CD4-positive, alpha-beta T cell (primary cell): ENCODE measurements at regions of chr1 and their contacts with region 1.

Region 1: GRCh38 chr1:114346480-114347029 is 164.4 kb downstream of the TRIM33 start:
- DNase-seq: peak; percentile 92 to 99 (median 98)
- ATAC-seq: peak; percentile 98
- H3K4me3 ChIP-seq: peak overlapping the region; percentile 55
- H3K4me3 Mint-ChIP-seq: peak overlapping the region; percentile 97
- H3K27ac ChIP-seq: peak overlapping the region in 1 of 2 donors; percentile 22
- H3K27ac Mint-ChIP-seq: peak overlapping the region; percentile 79
- H3K4me1 ChIP-seq: peaks cover 49% of the 10 kb centered on the region
- H3K4me1 Mint-ChIP-seq: peaks cover 31% of the 10 kb centered on the region
- H3K27me3 ChIP-seq: no peaks in the 10 kb centered on the region
- H3K27me3 Mint-ChIP-seq: no peaks in the 10 kb centered on the region
- CTCF ChIP-seq: peak; percentile 100

Region 2: DNA sequence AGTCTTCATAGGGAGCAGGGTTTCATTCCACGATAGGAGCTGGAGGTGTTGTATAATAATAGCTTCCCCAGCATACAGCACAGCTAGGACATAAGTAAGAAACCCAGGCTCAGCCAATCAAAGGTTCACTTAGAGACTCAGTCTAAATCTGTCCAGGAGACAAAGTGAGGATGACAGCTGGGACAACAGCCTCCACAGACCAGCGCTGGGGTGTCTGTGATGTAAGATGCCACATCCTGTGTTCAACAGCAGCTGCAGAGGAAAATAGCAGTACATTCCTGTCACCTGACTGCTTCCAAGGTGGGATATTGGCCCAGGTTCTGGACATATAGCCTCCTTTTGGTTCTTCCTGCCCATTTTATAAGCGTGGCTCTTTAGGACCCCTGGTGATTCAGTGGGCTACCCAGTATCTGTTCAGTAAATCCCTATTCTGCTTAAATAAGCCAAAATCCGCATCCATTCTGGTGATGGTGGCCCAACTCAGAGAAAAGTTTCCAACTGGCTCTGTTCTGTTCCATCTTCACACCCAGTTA is 16.0 kb before region 1 on chr1:
- CTCF ChIA-PET with region 1: interaction called, 7 read pairs
- POLR2A ChIA-PET with region 1: interaction called, 36 read pairs
- intact Hi-C with region 1: no loop called
- DNase-seq: peak in 7 of 14 experiments; percentile 22 to 78 (median 44)
- ATAC-seq: peak; percentile 83
- H3K4me3 ChIP-seq: no peak overlapping the region
- H3K4me3 Mint-ChIP-seq: no peak overlapping the region
- H3K27ac ChIP-seq: no peak overlapping the region
- H3K27ac Mint-ChIP-seq: peak overlapping the region; percentile 61
- H3K4me1 ChIP-seq: peaks cover 57% of the 10 kb centered on the region
- H3K4me1 Mint-ChIP-seq: peaks cover 66% of the 10 kb centered on the region
- H3K27me3 ChIP-seq: no peaks in the 10 kb centered on the region
- H3K27me3 Mint-ChIP-seq: no peaks in the 10 kb centered on the region
- CTCF ChIP-seq: no peak

Region 3: DNA sequence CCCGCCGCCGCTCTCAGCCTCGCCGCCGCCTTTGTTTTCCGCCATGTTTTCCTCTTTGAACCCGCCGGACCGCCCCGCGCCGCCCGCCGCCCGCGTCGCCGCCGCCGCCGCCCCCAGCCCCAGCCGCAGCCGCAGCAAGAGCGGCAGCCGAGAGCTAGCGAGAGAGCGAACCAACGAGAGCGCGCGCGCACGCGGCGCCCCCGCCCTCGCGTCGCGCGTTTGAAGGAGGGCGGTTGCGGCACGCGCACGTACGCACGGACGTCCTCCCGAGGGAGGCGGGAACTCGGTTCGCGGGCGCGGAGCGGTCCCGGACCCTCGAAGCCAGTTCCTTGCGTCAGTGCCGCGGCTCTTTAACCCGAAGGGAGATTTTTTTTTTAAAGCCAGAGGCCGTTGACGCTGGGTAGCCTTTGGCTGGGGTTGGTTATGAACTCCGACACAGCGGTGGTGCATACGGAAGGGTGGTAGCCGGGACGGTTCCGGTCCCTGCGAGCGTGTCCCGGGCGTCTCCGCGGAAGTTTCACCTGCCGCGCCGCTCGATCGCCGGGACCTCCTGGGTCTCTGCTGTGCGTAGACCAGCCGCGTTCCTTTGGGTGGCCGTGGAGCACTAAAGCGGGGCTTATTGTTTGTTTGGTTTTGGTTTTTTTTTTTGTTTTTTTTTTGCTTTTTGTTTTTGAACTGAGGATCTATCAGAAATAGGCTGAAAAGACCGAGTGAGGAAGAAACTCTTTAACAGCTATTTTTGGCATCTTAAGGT is 164.7 kb after region 1 on chr1 and contains the start of gene TRIM33:
- CTCF ChIA-PET with region 1: no interaction called
- POLR2A ChIA-PET with region 1: interaction called, 12 read pairs
- intact Hi-C with region 1: loop called in 1 of 2 experiments (anchors 5 kb)
- DNase-seq: peak; percentile 84 to 98 (median 90)
- ATAC-seq: peak; percentile 66
- H3K4me3 ChIP-seq: peak within 1 kb of the TSS; percentile 86
- H3K4me3 Mint-ChIP-seq: peak within 1 kb of the TSS; percentile 100
- H3K27ac ChIP-seq: peak within 1 kb of the TSS; percentile 95 to 99
- H3K27ac Mint-ChIP-seq: peak within 1 kb of the TSS; percentile 100
- H3K4me1 ChIP-seq: peaks cover 43% of the 10 kb centered on the region
- H3K4me1 Mint-ChIP-seq: peaks cover 48% of the 10 kb centered on the region
- H3K27me3 ChIP-seq: no peaks in the 10 kb centered on the region
- H3K27me3 Mint-ChIP-seq: no peaks in the 10 kb centered on the region
- CTCF ChIP-seq: no peak
- total RNA-seq, gene TRIM33: 42.6 to 45.0 TPM

Region 4: DNA sequence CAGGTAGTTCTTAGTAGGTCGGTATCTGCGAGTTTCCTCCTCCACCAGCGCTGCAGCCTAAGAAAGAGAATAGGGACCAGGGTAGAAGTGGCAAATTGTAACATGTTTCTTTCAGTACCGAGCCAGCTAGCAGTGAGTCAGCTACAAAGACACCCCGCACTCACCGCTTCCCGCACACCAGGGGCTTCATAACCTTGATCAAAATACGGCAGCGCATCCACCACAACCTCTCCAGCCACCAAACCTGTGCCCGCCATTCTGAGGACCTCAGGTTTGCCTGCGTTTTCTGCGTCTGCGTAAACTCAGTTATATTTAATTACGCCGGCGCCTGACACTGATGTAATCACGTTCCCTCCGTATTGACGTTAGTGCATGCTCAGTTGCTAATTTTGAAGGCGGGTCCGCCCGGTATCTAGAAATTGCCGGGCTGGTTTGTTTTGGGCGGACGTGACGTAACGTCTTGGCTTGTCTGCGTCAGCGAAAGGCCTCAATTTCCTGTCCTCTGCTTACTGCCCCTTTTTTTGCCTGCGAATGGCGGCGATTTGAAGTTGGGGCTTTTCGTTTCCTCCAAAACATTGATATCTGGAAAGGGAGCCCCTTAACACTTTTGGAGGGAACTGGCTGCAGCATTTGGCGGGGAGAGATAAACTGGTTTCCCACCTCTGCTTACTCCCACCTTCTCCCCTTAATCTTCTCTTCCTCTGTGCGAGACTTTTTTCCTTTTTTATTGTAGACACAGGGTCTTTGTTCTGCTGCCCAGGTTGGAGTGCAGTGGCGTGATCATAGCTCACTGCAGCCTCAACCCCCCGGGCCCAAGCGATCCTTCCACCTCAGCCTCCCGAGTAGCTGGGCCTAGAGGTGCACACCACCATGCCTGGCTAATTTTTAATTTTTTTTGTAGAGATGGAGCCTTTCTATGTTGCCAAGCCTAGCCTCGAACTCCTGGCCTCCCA is 235.1 kb after region 1 on chr1 and contains the start of gene BCAS2:
- CTCF ChIA-PET with region 1: no interaction called
- POLR2A ChIA-PET with region 1: no interaction called
- intact Hi-C with region 1: loop called in 1 of 2 experiments (anchors 2 kb)
- DNase-seq: peak; percentile 88 to 99 (median 92)
- ATAC-seq: peak; percentile 92
- H3K4me3 ChIP-seq: peak within 1 kb of the TSS; percentile 86
- H3K4me3 Mint-ChIP-seq: peak within 1 kb of the TSS; percentile 95
- H3K27ac ChIP-seq: peak within 1 kb of the TSS; percentile 82 to 97
- H3K27ac Mint-ChIP-seq: peak within 1 kb of the TSS; percentile 97
- H3K4me1 ChIP-seq: peaks cover 26% of the 10 kb centered on the region
- H3K4me1 Mint-ChIP-seq: peaks cover 48% of the 10 kb centered on the region
- H3K27me3 ChIP-seq: no peaks in the 10 kb centered on the region
- H3K27me3 Mint-ChIP-seq: no peaks in the 10 kb centered on the region
- CTCF ChIP-seq: no peak
- total RNA-seq, gene BCAS2: 109 to 111 TPM

Region 5: DNA sequence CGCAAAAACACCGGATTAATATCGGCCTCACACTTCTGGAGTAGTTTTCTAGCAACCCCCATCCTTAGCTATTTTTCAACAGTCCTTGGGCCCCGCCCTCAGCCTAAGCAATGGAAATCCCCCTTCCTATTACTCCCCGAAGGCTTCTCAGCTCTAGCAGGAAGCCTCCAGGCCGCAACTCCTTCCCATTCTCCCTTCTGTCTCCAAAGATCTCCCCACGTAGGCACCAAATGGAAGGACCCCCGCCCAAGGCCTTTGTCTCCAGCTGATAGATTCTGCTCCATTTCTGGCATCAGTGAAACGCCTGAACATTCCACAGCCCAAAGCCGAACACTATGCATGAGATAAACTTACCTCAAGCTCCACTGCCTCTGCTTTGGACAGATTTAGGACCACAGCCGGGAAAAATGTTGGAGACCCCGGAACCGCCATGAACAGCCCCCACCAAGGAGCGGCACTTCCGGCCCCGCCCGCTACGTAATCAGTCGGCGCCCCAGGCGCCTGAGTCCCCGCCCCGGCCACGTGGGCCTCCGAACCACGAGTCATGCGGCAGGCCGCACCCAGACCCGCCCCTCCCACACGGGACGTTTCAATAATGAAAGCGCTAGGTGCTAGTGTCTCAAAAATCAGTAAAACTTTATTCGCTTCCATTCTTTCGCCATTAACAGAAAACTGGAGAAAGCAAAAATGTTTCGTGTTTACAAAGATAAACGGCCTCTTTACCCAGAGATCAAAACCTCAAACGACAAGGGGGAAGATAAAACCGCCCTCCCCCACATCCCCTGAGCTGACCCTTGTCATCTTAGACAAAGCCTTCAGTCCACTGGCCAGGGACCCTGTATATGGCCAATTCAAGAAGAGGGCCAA is 370.0 kb after region 1 on chr1 and contains the start of gene NRAS:
- CTCF ChIA-PET with region 1: no interaction called
- POLR2A ChIA-PET with region 1: interaction called, 3 read pairs
- intact Hi-C with region 1: loop called in 1 of 2 experiments (anchors 10 kb)
- DNase-seq: peak; percentile 87 to 97 (median 94)
- ATAC-seq: peak; percentile 96
- H3K4me3 ChIP-seq: peak within 1 kb of the TSS; percentile 72
- H3K4me3 Mint-ChIP-seq: peak within 1 kb of the TSS; percentile 91
- H3K27ac ChIP-seq: peak within 1 kb of the TSS; percentile 83 to 96
- H3K27ac Mint-ChIP-seq: peak within 1 kb of the TSS; percentile 98
- H3K4me1 ChIP-seq: peaks cover 16% of the 10 kb centered on the region
- H3K4me1 Mint-ChIP-seq: peaks cover 21% of the 10 kb centered on the region
- H3K27me3 ChIP-seq: no peaks in the 10 kb centered on the region
- H3K27me3 Mint-ChIP-seq: no peaks in the 10 kb centered on the region
- CTCF ChIP-seq: no peak
- total RNA-seq, gene NRAS: 28.9 to 30.4 TPM

Region 6: GRCh38 chr1:115098979-115099692 is 752.6 kb after region 1 on chr1:
- CTCF ChIA-PET with region 1: no interaction called
- POLR2A ChIA-PET with region 1: no interaction called
- intact Hi-C with region 1: loop called in 1 of 2 experiments (anchors 10 kb)
- DNase-seq: peak; percentile 50 to 95 (median 69)
- ATAC-seq: peak; percentile 90
- H3K4me3 ChIP-seq: peak overlapping the region; percentile 55
- H3K4me3 Mint-ChIP-seq: peak overlapping the region; percentile 89
- H3K27ac ChIP-seq: peak overlapping the region; percentile 90 to 91
- H3K27ac Mint-ChIP-seq: peak overlapping the region; percentile 93
- H3K4me1 ChIP-seq: peaks cover 27% of the 10 kb centered on the region
- H3K4me1 Mint-ChIP-seq: peaks cover 60% of the 10 kb centered on the region
- H3K27me3 ChIP-seq: no peaks in the 10 kb centered on the region
- H3K27me3 Mint-ChIP-seq: no peaks in the 10 kb centered on the region
- CTCF ChIP-seq: no peak